PC-9 (cell line): ENCODE measurements at regions of chr10 and their contacts with region 1.

Region 1: GRCh38 chr10:73032536-73032935 is 64.1 kb downstream of the P4HA1 start:
- DNase-seq: no peak
- H3K4me3 ChIP-seq: no peak overlapping the region
- H3K27ac ChIP-seq: no peak overlapping the region
- H3K4me1 ChIP-seq: no peaks in the 10 kb centered on the region
- H3K27me3 ChIP-seq: no peaks in the 10 kb centered on the region
- CTCF ChIP-seq: no peak

Region 2: GRCh38 chr10:72158176-72158575 is 874.4 kb before region 1 on chr10:
- CTCF ChIA-PET with region 1: interaction called, 10 read pairs
- POLR2A ChIA-PET with region 1: no interaction called
- intact Hi-C with region 1: no loop called
- DNase-seq: no peak
- H3K4me3 ChIP-seq: no peak overlapping the region
- H3K27ac ChIP-seq: no peak overlapping the region
- H3K4me1 ChIP-seq: no peaks in the 10 kb centered on the region
- H3K27me3 ChIP-seq: no peaks in the 10 kb centered on the region
- CTCF ChIP-seq: no peak

Region 3: DNA sequence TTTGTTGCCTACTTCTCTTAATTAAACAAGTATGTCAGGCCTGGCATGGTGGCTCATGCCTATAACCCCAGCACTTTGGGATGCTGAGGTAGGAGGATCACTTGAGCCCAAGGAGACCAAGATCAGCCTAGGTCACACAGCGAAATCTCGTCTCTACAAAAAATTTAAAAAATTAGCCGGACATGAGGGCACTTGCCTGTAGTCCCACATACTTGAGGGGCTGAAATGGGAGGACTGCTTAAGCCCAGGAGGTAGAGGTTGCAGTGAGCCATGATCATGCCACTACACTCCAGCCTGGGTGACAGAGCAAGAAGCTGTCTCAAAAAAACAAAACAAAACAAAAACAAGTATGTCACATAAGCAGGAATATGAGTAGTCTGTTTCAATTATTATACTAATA is 15.2 kb after region 1 on chr10:
- CTCF ChIA-PET with region 1: no interaction called
- POLR2A ChIA-PET with region 1: no interaction called
- intact Hi-C with region 1: no loop called
- DNase-seq: no peak
- H3K4me3 ChIP-seq: no peak overlapping the region
- H3K27ac ChIP-seq: no peak overlapping the region
- H3K4me1 ChIP-seq: peaks cover 27% of the 10 kb centered on the region
- H3K27me3 ChIP-seq: no peaks in the 10 kb centered on the region
- CTCF ChIP-seq: no peak

Region 4: DNA sequence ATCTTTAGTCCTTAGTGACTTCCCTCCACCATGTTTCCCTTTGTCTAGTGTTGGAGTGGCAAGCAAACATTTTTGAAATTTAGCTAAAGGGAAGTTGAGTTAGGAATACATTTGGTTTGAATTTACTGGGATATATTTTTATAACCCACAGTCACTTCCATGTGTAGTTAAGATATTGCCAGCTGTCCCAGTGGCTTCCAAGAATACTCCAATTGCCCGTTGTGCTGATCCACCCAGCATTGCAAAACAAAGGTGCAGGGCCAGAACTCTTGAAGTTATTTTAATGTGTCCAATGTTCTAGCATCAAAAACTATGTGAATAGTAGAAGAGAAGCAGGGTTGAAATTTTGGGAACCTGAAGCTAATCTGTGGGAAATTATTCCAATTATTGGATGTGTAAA is 66.6 kb after region 1 on chr10:
- CTCF ChIA-PET with region 1: no interaction called
- POLR2A ChIA-PET with region 1: no interaction called
- intact Hi-C with region 1: no loop called
- DNase-seq: no peak
- H3K4me3 ChIP-seq: no peak overlapping the region
- H3K27ac ChIP-seq: no peak overlapping the region
- H3K4me1 ChIP-seq: peaks cover 14% of the 10 kb centered on the region
- H3K27me3 ChIP-seq: no peaks in the 10 kb centered on the region
- CTCF ChIP-seq: no peak

Region 5: DNA sequence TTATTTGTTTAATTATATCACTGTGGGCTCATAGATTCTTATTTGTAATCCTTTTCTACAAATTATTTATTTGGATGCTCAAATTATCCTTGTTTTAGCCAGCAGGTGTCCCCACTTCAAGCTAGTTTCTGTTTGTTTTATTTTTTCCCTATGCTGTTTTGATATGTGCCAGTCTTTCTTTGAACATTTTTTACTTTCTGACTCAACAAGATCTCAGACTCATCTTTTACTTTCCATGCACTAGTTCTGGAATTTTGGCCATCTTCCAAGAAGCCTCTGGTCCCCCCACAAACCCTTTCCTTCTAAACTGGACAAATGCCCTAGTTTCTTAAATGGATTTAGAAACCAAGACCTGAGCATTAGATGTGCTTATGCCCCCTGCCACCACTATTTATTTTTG is 231.4 kb after region 1 on chr10:
- CTCF ChIA-PET with region 1: no interaction called
- POLR2A ChIA-PET with region 1: no interaction called
- intact Hi-C with region 1: no loop called
- DNase-seq: peak in 1 of 2 experiments; percentile 43
- H3K4me3 ChIP-seq: no peak overlapping the region
- H3K27ac ChIP-seq: no peak overlapping the region; the same call in 1 of the 2 replicates
- H3K4me1 ChIP-seq: peaks cover 20% of the 10 kb centered on the region
- H3K27me3 ChIP-seq: no peaks in the 10 kb centered on the region
- CTCF ChIP-seq: peak; percentile 80

Region 6: GRCh38 chr10:73965890-73966768 is 933.6 kb after region 1 on chr10:
- CTCF ChIA-PET with region 1: no interaction called
- POLR2A ChIA-PET with region 1: no interaction called
- intact Hi-C with region 1: no loop called
- DNase-seq: peak; percentile 93 to 99
- H3K4me3 ChIP-seq: peak overlapping the region; percentile 43; the same call in 1 of the 2 replicates
- H3K27ac ChIP-seq: peak overlapping the region; percentile 99
- H3K4me1 ChIP-seq: peaks cover 38% of the 10 kb centered on the region
- H3K27me3 ChIP-seq: no peaks in the 10 kb centered on the region
- CTCF ChIP-seq: no peak